Activated CD4-positive, alpha-beta T cell treated with anti-CD3 and anti-CD28 coated beads for 36 hours (primary cell): ENCODE measurements at regions of chr21 and their contacts with region 1.

Region 1: DNA sequence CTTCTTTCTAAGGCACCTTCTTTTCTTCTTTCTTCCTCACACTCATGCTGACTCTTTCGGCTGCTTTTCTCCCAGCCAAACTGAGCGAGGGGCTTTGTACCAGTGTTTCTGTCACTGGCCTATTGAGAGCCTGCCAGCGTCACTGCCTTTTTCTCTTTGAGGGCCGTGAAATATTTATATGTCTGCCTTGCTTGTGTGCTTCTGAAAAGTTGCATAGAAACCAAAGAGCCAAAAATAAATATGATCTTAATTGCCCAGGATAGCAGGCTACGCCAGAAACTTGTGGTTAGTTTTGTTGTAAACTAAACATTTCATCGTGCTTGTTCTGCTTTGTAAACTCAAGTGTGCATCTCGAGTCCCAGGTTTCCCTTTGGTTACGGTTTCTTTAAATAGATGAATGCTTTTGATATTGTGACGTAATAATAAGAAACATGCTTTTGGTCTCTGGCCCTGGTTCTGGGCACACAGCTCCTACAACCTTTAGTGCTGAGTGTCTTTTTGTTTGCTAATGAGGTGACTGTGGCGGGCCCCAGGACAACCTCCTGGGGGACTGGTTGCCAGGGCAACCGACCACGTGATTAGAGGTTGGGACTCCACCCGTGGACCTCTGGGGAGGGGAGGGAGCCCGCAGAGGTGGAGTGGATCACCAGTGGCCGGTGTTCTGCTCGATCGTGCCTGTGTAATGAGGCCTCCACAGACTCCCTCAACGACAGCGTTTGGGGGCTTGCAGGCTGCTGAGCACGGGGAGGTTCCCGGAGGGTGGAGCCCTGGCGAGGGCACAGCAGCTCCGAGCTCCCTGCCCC is 10.9 kb downstream of the SLC37A1 start:
- DNase-seq: peak; percentile 56
- ATAC-seq: no peak
- H3K4me3 Mint-ChIP-seq: no peak overlapping the region
- H3K27ac Mint-ChIP-seq: peak overlapping the region; percentile 58
- H3K4me1 Mint-ChIP-seq: peaks cover 49% of the 10 kb centered on the region
- H3K27me3 Mint-ChIP-seq: no peaks in the 10 kb centered on the region

Region 2: DNA sequence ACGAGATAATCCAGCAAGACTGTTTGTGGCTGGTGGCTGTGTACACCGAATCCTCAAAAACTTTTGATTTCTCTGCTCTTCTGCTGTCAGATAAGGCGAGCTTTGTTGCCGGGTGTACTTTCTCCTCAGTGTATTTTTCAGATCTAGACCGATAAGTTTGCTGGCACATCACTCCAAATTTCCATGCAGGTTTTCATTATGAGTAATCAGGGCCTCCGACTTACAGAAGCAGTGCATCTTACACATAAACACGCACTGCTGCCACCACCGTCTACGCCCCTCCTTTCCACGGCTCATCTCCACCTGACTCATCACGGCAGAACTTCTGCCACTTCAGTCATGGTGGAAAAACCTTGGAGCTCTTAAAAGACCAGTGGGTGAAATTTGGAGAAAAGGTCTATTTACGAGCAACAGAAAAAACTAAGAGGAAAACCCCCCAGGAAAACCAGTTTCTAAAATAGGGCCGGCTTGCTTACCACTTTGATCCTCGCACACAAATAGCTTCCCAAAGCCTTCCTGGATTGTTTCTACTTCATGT is 522.1 kb before region 1 on chr21:
- CTCF ChIA-PET with region 1: interaction called, 3 read pairs
- POLR2A ChIA-PET with region 1: interaction called, 3 read pairs
- intact Hi-C with region 1: loop called in 1 of 2 experiments (anchors 2 kb)
- DNase-seq: peak; percentile 90
- ATAC-seq: peak; percentile 92
- H3K4me3 Mint-ChIP-seq: peak overlapping the region; percentile 52
- H3K27ac Mint-ChIP-seq: peak overlapping the region; percentile 93
- H3K4me1 Mint-ChIP-seq: peaks cover 61% of the 10 kb centered on the region
- H3K27me3 Mint-ChIP-seq: no peaks in the 10 kb centered on the region

Region 3: GRCh38 chr21:42145569-42146272 is 378.8 kb before region 1 on chr21:
- CTCF ChIA-PET with region 1: interaction called, 3 read pairs
- POLR2A ChIA-PET with region 1: no interaction called
- intact Hi-C with region 1: loop called in 1 of 2 experiments (anchors 10 kb)
- DNase-seq: peak; percentile 80
- ATAC-seq: peak; percentile 81
- H3K4me3 Mint-ChIP-seq: no peak overlapping the region
- H3K27ac Mint-ChIP-seq: peak overlapping the region; percentile 38
- H3K4me1 Mint-ChIP-seq: peaks cover 10% of the 10 kb centered on the region
- H3K27me3 Mint-ChIP-seq: peaks cover 2% of the 10 kb centered on the region

Region 4: DNA sequence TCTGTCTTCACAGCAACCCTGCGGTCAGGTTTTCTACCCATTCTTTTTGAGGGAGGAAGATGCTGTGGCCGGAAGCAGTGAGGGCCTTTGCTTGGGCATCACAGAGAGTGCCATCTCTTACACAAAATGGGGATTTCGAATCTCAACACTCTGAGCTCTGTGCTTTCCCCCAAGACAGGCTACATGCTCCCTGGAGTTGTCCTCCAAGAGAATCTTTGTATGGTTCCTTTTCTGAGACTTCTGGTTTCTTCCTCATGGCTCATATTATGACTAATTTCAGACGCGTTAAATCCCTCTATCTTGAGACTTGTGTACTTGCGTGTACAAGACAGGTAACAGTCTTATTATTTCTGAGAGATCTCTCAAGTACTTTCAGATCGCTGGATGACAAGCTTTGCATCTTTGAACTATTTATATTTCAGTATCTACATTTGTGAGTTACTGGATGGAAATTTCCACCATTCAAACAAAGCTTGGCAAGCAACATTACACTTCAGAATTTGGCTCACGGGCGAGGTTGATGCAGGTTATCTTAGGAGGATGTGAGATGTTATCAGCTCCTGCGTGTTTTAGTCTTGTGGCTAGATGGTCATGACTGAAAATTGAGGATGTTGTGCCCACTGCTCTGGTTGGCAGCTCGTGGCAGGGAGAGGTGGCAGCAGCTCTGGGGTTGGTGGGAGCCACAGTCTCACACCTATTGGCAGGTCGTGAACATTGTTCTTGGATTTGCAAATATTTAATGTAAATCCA is 286.2 kb before region 1 on chr21:
- CTCF ChIA-PET with region 1: no interaction called
- POLR2A ChIA-PET with region 1: interaction called, 6 read pairs
- intact Hi-C with region 1: loop called in 1 of 2 experiments (anchors 1 kb)
- DNase-seq: peak; percentile 61
- ATAC-seq: peak; percentile 7
- H3K4me3 Mint-ChIP-seq: peak overlapping the region; percentile 50
- H3K27ac Mint-ChIP-seq: peak overlapping the region; percentile 92
- H3K4me1 Mint-ChIP-seq: peaks cover 59% of the 10 kb centered on the region
- H3K27me3 Mint-ChIP-seq: no peaks in the 10 kb centered on the region

Region 5: GRCh38 chr21:42400525-42400924 is 124.0 kb before region 1 on chr21:
- CTCF ChIA-PET with region 1: no interaction called
- POLR2A ChIA-PET with region 1: interaction called, 6 read pairs
- intact Hi-C with region 1: loop called in 1 of 2 experiments (anchors 1 kb)
- DNase-seq: no peak
- ATAC-seq: peak; percentile 34
- H3K4me3 Mint-ChIP-seq: peak overlapping the region; percentile 48
- H3K27ac Mint-ChIP-seq: peak overlapping the region; percentile 89
- H3K4me1 Mint-ChIP-seq: peaks cover 58% of the 10 kb centered on the region
- H3K27me3 Mint-ChIP-seq: no peaks in the 10 kb centered on the region

Region 6: DNA sequence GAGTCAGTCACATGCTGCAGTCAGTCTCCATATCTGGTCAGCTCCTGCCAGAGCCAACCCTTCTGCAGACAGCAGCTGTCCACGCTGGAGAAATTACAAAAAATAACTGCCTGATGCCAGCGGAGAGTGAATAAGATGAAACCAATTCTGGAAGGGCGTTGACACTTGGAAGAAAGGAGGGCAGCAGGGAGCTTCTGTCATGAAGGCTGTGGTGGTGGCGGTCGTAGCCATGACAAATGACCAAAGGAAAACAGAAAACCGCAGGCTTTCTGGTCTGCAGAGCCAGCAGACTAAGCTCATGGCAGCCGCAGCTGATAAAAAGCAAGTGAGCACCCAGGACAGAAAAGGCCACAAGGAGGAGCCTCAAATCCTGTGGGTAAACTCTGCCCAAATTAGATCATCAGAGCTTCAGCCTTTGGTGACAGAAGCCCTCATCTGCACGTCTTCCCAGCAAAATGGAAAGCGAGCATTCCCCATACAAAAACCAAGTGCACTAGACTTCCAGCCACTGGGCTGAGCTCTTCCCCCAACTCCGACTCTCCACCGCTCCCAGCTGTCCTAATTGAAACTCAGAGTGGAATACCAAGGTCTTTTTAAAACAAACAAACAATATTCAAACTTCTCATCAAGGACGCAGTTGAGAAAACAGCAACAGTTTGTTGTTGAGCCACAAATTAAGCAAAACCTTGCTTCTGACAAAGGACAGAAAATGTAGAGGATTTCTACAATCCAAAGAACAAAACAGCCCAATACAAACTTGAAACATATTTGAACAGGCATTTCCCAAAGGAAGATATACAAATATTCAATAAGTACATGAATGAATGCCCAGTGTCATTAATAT is 57.2 kb before region 1 on chr21:
- CTCF ChIA-PET with region 1: no interaction called
- POLR2A ChIA-PET with region 1: no interaction called
- intact Hi-C with region 1: loop called (anchors 5 kb)
- DNase-seq: peak; percentile 43
- ATAC-seq: no peak
- H3K4me3 Mint-ChIP-seq: no peak overlapping the region
- H3K27ac Mint-ChIP-seq: no peak overlapping the region
- H3K4me1 Mint-ChIP-seq: peaks cover 34% of the 10 kb centered on the region
- H3K27me3 Mint-ChIP-seq: no peaks in the 10 kb centered on the region

Region 7: GRCh38 chr21:42513985-42514882 is 10.3 kb before region 1 on chr21:
- CTCF ChIA-PET with region 1: interaction called, 4 read pairs
- POLR2A ChIA-PET with region 1: interaction called, 13 read pairs
- intact Hi-C with region 1: loop called (anchors 1 kb)
- DNase-seq: peak; percentile 81
- ATAC-seq: peak; percentile 78
- H3K4me3 Mint-ChIP-seq: peak overlapping the region; percentile 81
- H3K27ac Mint-ChIP-seq: peak overlapping the region; percentile 82
- H3K4me1 Mint-ChIP-seq: peaks cover 13% of the 10 kb centered on the region
- H3K27me3 Mint-ChIP-seq: no peaks in the 10 kb centered on the region